ENCODE measurements at regions of chr10 and their contacts with region 1.

Region 1: DNA sequence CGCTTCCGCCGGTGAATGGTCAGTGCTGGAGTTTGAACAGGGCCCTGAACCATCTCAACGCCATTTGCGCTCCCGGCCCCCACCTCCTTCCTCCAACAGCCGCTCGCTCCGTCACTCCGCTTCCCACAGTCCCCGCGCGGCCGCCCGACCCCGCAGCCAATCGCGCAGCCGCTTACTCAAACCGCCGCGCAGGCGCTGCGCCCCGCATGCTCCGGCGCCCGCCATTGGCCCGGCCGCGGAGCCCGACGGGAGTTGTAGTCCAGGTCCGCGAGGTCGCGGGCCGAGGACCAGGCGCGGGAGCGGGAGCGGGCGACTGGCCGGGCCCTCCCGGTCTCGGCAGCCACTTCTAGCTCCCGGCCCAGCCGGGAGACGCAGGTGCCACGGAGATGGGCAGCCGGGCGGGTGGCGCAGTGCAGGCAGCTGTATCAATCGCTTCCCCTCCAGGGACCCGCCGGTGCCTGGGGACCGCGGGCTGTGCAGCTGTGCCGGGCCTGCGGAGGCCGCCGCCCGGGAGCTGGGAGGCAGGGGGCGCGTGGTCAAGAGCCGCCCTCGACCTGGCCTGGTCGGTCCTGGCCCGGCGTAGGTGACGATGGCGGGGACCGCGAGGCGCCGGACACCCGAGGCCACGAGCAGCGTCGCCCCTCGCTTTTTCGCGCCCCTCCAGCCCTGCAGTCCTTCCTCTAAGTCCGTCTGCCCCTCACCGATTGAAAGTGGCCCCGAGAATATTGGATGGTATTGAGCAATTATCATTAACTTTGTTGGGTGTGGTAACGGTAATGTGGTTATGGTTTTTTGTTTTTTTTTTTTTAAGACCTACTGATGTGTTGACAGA is at the start of gene WAPL:
- DNase-seq: peak; percentile 88 to 97 (median 91)
- ATAC-seq: peak; percentile 94
- H3K4me3 ChIP-seq: peak within 1 kb of the TSS; percentile 92
- H3K4me3 Mint-ChIP-seq: peak within 1 kb of the TSS; percentile 98
- H3K27ac ChIP-seq: peak within 1 kb of the TSS; percentile 68 to 83
- H3K27ac Mint-ChIP-seq: peak within 1 kb of the TSS; percentile 92
- H3K4me1 ChIP-seq: peaks cover 29% of the 10 kb centered on the region
- H3K4me1 Mint-ChIP-seq: peaks cover 70% of the 10 kb centered on the region
- H3K27me3 ChIP-seq: no peaks in the 10 kb centered on the region
- H3K27me3 Mint-ChIP-seq: no peaks in the 10 kb centered on the region
- CTCF ChIP-seq: no peak
- total RNA-seq, gene WAPL: 34.3 TPM

Region 2: DNA sequence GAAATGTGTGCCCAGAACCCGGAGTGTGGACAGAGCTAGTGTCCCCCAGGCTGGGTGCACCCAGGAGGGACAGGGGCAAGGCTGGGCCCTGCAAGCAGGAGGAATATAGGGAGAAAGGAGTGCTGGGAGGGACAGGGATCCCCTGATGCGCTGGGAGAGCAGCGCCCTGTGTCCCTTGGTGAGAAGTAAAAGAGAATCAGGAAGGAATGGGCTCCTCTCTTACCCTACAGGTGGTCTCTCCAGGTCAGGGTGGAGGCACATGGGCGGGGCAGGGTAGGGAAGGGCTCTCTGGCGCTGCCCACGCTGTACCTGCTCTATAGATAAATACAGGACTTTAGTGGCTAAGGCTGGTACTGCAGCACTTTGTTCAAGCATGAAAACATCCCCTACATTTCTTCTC is 909.1 kb before region 1 on chr10:
- CTCF ChIA-PET with region 1: no interaction called
- POLR2A ChIA-PET with region 1: no interaction called
- intact Hi-C with region 1: loop called in 1 of 2 experiments (anchors 5 kb)
- DNase-seq: peak in 6 of 14 experiments; percentile 4 to 51 (median 30)
- ATAC-seq: peak; percentile 43
- H3K4me3 ChIP-seq: no peak overlapping the region
- H3K4me3 Mint-ChIP-seq: peak overlapping the region; percentile 78
- H3K27ac ChIP-seq: no peak overlapping the region
- H3K27ac Mint-ChIP-seq: peak overlapping the region; percentile 77
- H3K4me1 ChIP-seq: peaks cover 50% of the 10 kb centered on the region
- H3K4me1 Mint-ChIP-seq: peaks cover 76% of the 10 kb centered on the region
- H3K27me3 ChIP-seq: no peaks in the 10 kb centered on the region
- H3K27me3 Mint-ChIP-seq: no peaks in the 10 kb centered on the region
- CTCF ChIP-seq: peak; percentile 56

Region 3: GRCh38 chr10:86535057-86535882 is 13.4 kb after region 1 on chr10:
- CTCF ChIA-PET with region 1: no interaction called
- POLR2A ChIA-PET with region 1: interaction called, 17 read pairs
- intact Hi-C with region 1: loop called (anchors 1 to 2 kb)
- DNase-seq: peak in 10 of 14 experiments; percentile 4 to 60 (median 38)
- ATAC-seq: peak; percentile 16
- H3K4me3 ChIP-seq: peak overlapping the region; percentile 53
- H3K4me3 Mint-ChIP-seq: peak overlapping the region; percentile 75
- H3K27ac ChIP-seq: no peak overlapping the region
- H3K27ac Mint-ChIP-seq: peak overlapping the region; percentile 91
- H3K4me1 ChIP-seq: peaks cover 29% of the 10 kb centered on the region
- H3K4me1 Mint-ChIP-seq: peaks cover 30% of the 10 kb centered on the region
- H3K27me3 ChIP-seq: no peaks in the 10 kb centered on the region
- H3K27me3 Mint-ChIP-seq: no peaks in the 10 kb centered on the region
- CTCF ChIP-seq: no peak

Region 4: DNA sequence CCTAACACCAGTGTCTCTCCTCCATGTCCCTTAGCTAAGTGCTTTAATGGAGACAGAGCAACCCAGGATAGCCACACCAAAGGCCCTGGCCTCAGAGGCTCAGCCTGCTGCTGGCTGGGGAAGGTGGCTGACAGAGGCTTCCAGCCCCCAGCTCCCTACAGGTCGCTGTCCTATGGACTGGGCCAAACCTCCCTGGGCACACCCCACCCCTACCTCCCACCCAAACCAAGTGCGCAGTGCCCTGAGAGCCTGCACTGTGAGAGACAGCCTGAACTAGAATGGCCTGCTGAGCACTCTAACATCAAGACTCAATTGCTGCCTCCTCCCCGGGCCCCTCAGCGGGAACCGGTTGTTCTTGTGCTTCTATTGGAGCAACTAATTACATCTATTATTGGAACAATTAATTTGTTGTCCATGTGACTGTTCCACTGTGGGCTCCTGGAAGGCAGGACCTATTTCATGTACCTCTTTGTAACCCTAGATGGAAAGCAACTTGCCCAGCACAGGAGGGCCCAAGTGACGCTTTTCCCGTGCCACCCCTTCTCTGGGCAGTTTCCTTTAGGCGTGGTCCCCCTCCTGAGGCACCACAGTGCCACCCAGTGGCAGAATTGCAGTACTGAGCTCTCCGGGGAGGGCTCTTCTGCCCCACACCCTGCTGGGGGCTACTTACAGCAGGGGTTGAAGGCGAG is 63.3 kb after region 1 on chr10:
- CTCF ChIA-PET with region 1: interaction called, 5 read pairs
- POLR2A ChIA-PET with region 1: no interaction called
- intact Hi-C with region 1: loop called (anchors 5 kb)
- DNase-seq: peak; percentile 56 to 86 (median 67)
- ATAC-seq: peak; percentile 97
- H3K4me3 ChIP-seq: no peak overlapping the region
- H3K4me3 Mint-ChIP-seq: no peak overlapping the region
- H3K27ac ChIP-seq: no peak overlapping the region
- H3K27ac Mint-ChIP-seq: no peak overlapping the region
- H3K4me1 ChIP-seq: peaks cover 8% of the 10 kb centered on the region
- H3K4me1 Mint-ChIP-seq: peaks cover 5% of the 10 kb centered on the region
- H3K27me3 ChIP-seq: no peaks in the 10 kb centered on the region
- H3K27me3 Mint-ChIP-seq: no peaks in the 10 kb centered on the region
- CTCF ChIP-seq: peak; percentile 96

Region 5: GRCh38 chr10:86710987-86711512 is 189.2 kb after region 1 on chr10:
- CTCF ChIA-PET with region 1: no interaction called
- POLR2A ChIA-PET with region 1: no interaction called
- intact Hi-C with region 1: loop called in 1 of 2 experiments (anchors 5 kb)
- DNase-seq: peak; percentile 68 to 93 (median 82)
- ATAC-seq: peak; percentile 95
- H3K4me3 ChIP-seq: peak overlapping the region; percentile 67
- H3K4me3 Mint-ChIP-seq: peak overlapping the region; percentile 95
- H3K27ac ChIP-seq: peak overlapping the region; percentile 78 to 81
- H3K27ac Mint-ChIP-seq: peak overlapping the region; percentile 95
- H3K4me1 ChIP-seq: peaks cover 17% of the 10 kb centered on the region
- H3K4me1 Mint-ChIP-seq: peaks cover 20% of the 10 kb centered on the region
- H3K27me3 ChIP-seq: no peaks in the 10 kb centered on the region
- H3K27me3 Mint-ChIP-seq: no peaks in the 10 kb centered on the region
- CTCF ChIP-seq: peak; percentile 77

Region 6: GRCh38 chr10:86755740-86756510 is 234.0 kb after region 1 on chr10:
- CTCF ChIA-PET with region 1: no interaction called
- POLR2A ChIA-PET with region 1: no interaction called
- intact Hi-C with region 1: loop called in 1 of 2 experiments (anchors 5 kb)
- DNase-seq: peak; percentile 67 to 92 (median 85)
- ATAC-seq: peak; percentile 92
- H3K4me3 ChIP-seq: peak overlapping the region; percentile 62
- H3K4me3 Mint-ChIP-seq: peak overlapping the region; percentile 91
- H3K27ac ChIP-seq: no peak overlapping the region
- H3K27ac Mint-ChIP-seq: peak overlapping the region; percentile 56
- H3K4me1 ChIP-seq: peaks cover 13% of the 10 kb centered on the region
- H3K4me1 Mint-ChIP-seq: peaks cover 32% of the 10 kb centered on the region
- H3K27me3 ChIP-seq: peaks cover 0 to 6% of the 10 kb centered on the region in 2 experiments
- H3K27me3 Mint-ChIP-seq: peaks cover 31% of the 10 kb centered on the region
- CTCF ChIP-seq: no peak

Region 7: GRCh38 chr10:87094373-87095235 is 572.7 kb after region 1 on chr10 and contains the starts of genes GLUD1 and SHLD2:
- CTCF ChIA-PET with region 1: no interaction called
- POLR2A ChIA-PET with region 1: no interaction called
- intact Hi-C with region 1: loop called in 1 of 2 experiments (anchors 10 kb)
- DNase-seq: peak; percentile 75 to 95 (median 84)
- ATAC-seq: peak; percentile 57
- H3K4me3 ChIP-seq: peak within 1 kb of the TSS; percentile 78
- H3K4me3 Mint-ChIP-seq: peak within 1 kb of the TSS; percentile 96
- H3K27ac ChIP-seq: peak within 1 kb of the TSS; percentile 69 to 93
- H3K27ac Mint-ChIP-seq: peak within 1 kb of the TSS; percentile 94
- H3K4me1 ChIP-seq: peaks cover 24% of the 10 kb centered on the region
- H3K4me1 Mint-ChIP-seq: peaks cover 61% of the 10 kb centered on the region
- H3K27me3 ChIP-seq: no peaks in the 10 kb centered on the region
- H3K27me3 Mint-ChIP-seq: no peaks in the 10 kb centered on the region
- CTCF ChIP-seq: no peak
- total RNA-seq, gene GLUD1: 81.0 to 82.4 TPM
- total RNA-seq, gene SHLD2: 20.6 to 23.0 TPM

Measured in CD4-positive, alpha-beta T cell (primary cell).